Esophagus muscularis mucosa (tissue), 4 donors: ENCODE measurements at regions of chr18 and their contacts with region 1.

Region 1: GRCh38 chr18:79644006-79644665 is 35.5 kb upstream of the CTDP1 start:
- DNase-seq: no peak
- H3K4me3 ChIP-seq: no peak overlapping the region
- H3K27ac ChIP-seq: no peak overlapping the region
- H3K4me1 ChIP-seq: peaks cover 3 to 6% (median 6%) of the 10 kb centered on the region in 4 donors
- H3K27me3 ChIP-seq: peaks cover 0 to 45% (median 0%) of the 10 kb centered on the region in 4 donors
- CTCF ChIP-seq: peak; percentile 93 to 96 (median 94)
- EP300 ChIP-seq: no peak
- POLR2A ChIP-seq: no peak

Region 2: DNA sequence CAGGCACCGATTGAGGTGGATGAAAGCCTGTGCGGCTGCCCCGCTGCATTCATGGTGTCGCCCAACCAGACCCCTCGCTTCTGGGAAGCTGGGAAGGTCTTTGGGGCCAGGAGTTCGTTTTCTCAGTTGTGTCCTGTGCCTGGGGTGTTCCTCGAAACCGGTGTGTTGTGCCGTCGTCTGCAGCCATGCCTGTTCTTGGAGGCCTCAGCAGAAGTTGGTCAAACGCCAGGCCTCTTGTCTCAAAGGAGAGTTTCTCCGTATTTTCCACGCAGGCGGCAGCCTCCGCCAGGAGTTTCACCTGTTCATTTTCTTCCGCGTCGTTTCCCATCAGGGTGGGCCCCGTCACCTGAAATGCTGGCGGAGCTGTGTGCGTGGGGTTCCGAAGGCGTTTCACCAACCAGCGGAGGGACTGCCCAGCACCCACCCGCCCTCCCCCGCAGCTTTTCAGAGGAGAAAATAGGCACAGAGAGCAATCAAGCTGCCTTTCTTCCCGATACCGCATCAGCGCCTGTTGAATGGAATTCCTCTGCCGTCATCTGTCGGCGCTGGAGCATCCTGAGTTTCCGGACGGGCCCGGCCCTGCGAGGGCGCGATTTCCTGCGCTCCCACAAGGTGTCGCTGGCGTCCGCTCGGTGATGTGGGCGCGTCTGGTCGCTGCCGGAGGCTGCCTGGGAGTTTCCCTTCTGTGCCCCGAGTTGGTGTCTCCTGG is 265.4 kb before region 1 on chr18:
- intact Hi-C with region 1: loop called (anchors 1 kb)
- DNase-seq: no peak
- H3K4me3 ChIP-seq: no peak overlapping the region
- H3K27ac ChIP-seq: no peak overlapping the region
- H3K4me1 ChIP-seq: peaks cover 4 to 14% (median 9%) of the 10 kb centered on the region in 4 donors
- H3K27me3 ChIP-seq: no peaks in the 10 kb centered on the region
- CTCF ChIP-seq: peak; percentile 95 to 99 (median 96)
- EP300 ChIP-seq: no peak
- POLR2A ChIP-seq: no peak

Region 3: DNA sequence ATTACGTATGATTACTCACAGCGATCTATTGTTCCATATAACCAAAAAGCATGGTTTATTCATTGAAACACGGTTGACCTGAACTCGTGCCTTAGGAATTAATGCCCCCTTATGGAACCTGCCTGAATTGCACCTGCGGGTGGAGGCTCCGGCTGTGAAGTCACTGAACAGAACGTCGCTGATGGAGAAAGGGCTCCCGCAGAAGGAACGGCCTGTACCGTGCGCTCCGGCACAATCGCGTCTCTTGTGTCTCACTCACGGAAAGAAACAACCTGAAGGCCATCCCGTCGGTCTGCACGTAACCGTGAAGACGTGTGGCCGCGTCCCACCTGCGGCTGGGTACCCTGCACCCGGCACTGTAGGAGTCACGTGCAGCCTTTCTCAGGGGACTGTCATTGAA is 115.3 kb before region 1 on chr18:
- intact Hi-C with region 1: loop called (anchors 2 kb)
- DNase-seq: no peak
- H3K4me3 ChIP-seq: no peak overlapping the region
- H3K27ac ChIP-seq: no peak overlapping the region
- H3K4me1 ChIP-seq: peaks cover 15 to 28% (median 24%) of the 10 kb centered on the region in 4 donors
- H3K27me3 ChIP-seq: peaks cover 0 to 15% (median 0%) of the 10 kb centered on the region in 4 donors
- CTCF ChIP-seq: peak; percentile 88 to 99 (median 90)
- EP300 ChIP-seq: no peak
- POLR2A ChIP-seq: no peak